ENCODE measurements at regions of chr1 and their contacts with region 1.

Region 1: GRCh38 chr1:161305867-161306519 is 3.8 kb downstream of the MPZ start:
- DNase-seq: peak; percentile 91
- ATAC-seq: peak; percentile 98
- H3K4me3 Mint-ChIP-seq: peak overlapping the region; percentile 96
- H3K27ac Mint-ChIP-seq: peak overlapping the region; percentile 88
- H3K4me1 Mint-ChIP-seq: peaks cover 34% of the 10 kb centered on the region
- H3K27me3 Mint-ChIP-seq: no peaks in the 10 kb centered on the region

Region 2: DNA sequence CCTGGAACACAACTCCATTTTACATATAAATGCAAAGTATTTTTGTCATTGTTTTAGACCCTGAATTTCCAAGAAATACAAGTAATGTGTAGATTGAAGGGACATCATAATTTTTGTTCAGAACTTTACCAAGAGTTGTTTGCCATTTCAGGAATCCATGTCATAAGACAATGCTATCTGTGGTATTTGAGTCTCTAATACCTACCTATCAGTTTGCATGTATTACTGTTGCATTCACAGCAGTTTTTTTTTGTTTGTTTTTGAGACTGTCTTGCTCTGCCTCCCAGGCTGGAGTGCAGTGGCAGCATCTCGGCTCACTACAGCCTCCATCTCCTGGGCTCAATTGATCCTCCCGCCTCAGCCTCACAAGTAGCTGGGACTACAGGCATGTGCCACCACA is 13.4 kb before region 1 on chr1:
- CTCF ChIA-PET with region 1: interaction called, 22 read pairs
- POLR2A ChIA-PET with region 1: no interaction called
- intact Hi-C with region 1: no loop called
- DNase-seq: no peak
- ATAC-seq: no peak
- H3K4me3 Mint-ChIP-seq: no peak overlapping the region
- H3K27ac Mint-ChIP-seq: no peak overlapping the region
- H3K4me1 Mint-ChIP-seq: no peaks in the 10 kb centered on the region
- H3K27me3 Mint-ChIP-seq: no peaks in the 10 kb centered on the region

Region 3: DNA sequence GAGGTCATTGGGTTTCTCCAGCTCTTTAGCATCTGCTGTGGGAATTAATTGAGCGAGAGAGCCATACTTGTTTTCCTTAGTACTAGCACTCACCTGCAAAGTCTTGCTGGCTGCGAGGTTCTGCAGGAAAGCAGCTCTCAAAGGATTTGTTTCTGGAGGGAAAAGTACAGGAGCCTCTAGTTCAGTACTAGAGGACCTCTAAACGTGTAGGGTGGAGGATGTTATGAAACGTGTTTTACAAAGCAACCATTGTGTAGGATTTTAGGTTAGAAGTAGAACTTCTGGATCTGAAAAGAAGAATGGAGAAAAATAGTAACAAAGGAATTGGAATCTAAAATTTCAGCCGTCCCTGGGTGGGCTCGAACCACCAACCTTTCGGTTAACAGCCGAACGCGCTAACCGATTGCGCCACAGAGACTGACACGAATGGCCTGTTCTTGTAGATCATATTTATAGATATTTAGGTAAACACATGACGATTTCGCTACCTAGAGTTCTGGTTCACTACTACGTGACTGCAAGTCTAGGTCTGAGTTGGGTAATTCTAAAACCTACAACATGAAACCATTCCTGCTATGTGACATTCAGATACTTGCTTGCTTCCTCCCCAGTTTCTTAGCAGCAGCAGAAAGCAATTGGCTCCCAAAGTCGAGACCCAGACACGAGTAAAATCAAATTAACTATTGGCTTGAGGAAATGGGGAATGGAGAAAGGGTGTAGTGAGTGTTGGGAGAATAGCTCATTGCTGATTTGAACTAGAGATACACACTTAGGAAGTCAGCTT is 121.9 kb after region 1 on chr1:
- CTCF ChIA-PET with region 1: no interaction called
- POLR2A ChIA-PET with region 1: no interaction called
- intact Hi-C with region 1: loop called in 1 of 2 experiments (anchors 5 kb)
- DNase-seq: peak; percentile 69
- ATAC-seq: peak; percentile 88
- H3K4me3 Mint-ChIP-seq: peak overlapping the region; percentile 45
- H3K27ac Mint-ChIP-seq: peak overlapping the region; percentile 10
- H3K4me1 Mint-ChIP-seq: peaks cover 15% of the 10 kb centered on the region
- H3K27me3 Mint-ChIP-seq: peaks cover 45% of the 10 kb centered on the region

Measured in activated CD4-positive, alpha-beta T cell treated with anti-CD3 and anti-CD28 coated beads for 36 hours (primary cell).